ENCODE measurements at regions of chr1 and their contacts with region 1.

Region 1: GRCh38 chr1:149962123-149962548 is 25.5 kb upstream of the MTMR11 start:
- H3K4me3 ChIP-seq: no peak overlapping the region
- H3K27ac ChIP-seq: no peak overlapping the region
- H3K4me1 ChIP-seq: no peaks in the 10 kb centered on the region
- CTCF ChIP-seq: peak; percentile 22; the same call in 1 of the 2 replicates

Region 2: DNA sequence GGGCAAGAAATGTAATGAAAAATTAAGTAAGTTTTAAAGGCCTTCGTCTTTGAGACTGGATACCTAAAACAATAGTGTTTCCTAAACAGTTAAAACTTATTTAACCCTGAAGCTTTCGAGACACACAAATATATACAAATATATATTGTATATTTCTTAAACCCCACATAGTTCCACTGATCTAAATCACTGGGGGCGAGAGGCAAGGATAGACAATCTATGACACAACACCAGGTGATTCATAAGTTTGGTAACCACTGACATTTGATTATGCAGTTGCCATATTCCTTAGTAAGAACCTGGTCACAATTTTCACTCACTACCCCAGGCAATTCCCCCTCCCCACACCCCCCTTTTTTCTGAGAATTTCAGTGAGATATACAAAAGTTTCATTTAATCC is 118.0 kb before region 1 on chr1:
- CTCF ChIA-PET with region 1: no interaction called
- POLR2A ChIA-PET with region 1: no interaction called
- H3K4me3 ChIP-seq: peak overlapping the region; percentile 54
- H3K27ac ChIP-seq: no peak overlapping the region
- H3K4me1 ChIP-seq: 0 out of 2 replicates have a peak, but pooled peaks cover 8% of the 10 kb centered on the region
- CTCF ChIP-seq: no peak

Region 3: DNA sequence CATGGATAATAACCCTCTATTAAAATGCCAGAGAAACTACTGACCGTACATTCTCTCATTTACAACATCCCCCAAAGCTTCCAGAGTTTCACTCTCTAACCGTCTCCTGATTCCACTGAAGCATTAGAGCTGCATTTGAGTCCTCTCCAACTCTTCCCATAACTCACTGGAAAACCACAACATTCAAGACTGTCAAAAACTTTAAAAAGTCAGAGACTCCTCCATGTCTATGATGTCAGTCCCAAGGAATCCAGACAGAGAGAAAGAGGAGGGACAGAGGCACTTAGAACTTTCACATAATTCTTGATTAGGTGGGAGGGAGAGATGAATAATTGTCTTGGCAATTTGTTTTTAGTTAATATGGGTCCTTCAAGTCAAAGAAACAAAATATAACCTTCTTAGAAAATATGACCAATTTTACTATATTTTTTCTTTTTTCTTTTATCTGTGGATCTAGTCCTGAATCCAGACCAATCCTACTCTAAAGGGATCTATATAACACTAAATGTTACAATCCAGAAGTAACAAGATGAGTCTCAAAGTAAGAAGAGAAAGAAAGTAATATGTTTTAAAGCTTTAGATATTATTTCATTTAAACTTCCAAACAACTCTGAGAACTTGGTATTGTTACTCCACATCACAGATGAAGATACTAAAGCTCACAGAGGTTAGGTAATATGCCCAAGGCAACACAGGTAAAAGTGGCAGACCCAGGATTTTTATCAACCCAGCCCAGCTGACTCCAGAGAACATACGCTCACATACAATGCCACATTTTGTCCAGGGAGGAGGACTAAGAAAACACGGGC is 24.6 kb after region 1 on chr1:
- CTCF ChIA-PET with region 1: interaction called, 11 read pairs
- POLR2A ChIA-PET with region 1: no interaction called
- H3K4me3 ChIP-seq: no peak overlapping the region
- H3K27ac ChIP-seq: no peak overlapping the region
- H3K4me1 ChIP-seq: peaks cover 8% of the 10 kb centered on the region; the same call in 1 of the 2 replicates
- CTCF ChIP-seq: no peak

Region 4: DNA sequence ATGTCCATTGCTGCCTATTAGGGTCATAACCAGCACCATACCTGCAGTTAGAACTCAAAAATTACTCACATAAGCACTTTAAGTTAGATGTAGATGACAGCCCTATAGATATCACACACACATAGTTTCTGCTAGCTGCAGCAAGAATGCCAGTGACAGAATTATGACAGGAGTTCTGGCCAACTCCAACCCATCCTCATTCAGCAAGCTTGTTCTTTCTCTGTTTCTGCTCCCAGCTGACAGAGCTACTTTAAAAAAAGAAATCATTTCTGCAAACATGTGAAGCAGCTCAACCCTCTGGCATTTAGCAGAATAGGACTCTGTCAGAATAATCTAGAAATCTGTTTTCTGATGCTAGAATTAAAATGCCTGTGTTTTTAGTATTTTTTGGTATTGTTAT is 72.2 kb after region 1 on chr1:
- CTCF ChIA-PET with region 1: interaction called, 15 read pairs
- POLR2A ChIA-PET with region 1: no interaction called
- H3K4me3 ChIP-seq: no peak overlapping the region
- H3K27ac ChIP-seq: no peak overlapping the region
- H3K4me1 ChIP-seq: no peaks in the 10 kb centered on the region
- CTCF ChIP-seq: no peak

Region 5: DNA sequence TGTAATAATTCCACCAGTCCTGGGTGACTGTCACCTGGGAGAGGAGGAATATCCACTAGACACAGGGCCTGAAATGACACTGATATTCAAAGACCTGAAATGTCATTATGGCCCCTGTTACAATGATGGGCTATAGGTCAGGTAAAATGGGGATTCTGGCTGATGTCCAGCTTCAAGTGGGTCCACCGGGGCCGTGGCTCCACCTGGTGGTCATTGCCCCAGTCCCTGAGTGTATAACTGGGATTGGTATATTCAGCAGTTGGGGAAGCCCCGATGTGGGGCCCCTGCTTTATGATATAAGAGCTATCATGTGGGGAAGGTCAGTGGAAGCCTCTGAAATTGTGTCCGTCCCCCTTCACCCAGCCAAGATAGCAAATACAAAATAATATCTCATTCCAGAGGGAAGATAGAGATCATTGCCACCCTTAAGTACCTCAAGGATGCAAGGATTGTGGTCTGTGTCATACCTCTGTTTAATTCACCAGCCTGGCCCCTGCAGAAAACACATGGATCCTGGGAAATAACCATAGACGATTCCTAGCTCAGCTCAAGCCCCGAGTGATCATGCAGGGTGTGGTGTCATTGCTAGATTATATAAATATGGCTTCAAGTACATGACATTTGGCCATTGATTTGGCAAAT is 206.9 kb after region 1 on chr1:
- CTCF ChIA-PET with region 1: interaction called, 10 read pairs
- POLR2A ChIA-PET with region 1: no interaction called
- H3K4me3 ChIP-seq: no peak overlapping the region
- H3K27ac ChIP-seq: no peak overlapping the region
- H3K4me1 ChIP-seq: no peaks in the 10 kb centered on the region
- CTCF ChIP-seq: peak; percentile 67

Measured in HEK293 (cell line).